Panc1 (cell line): ENCODE measurements at regions of chr17 and their contacts with region 1.

Region 1: GRCh38 chr17:72120642-72121163 is at the start of gene SOX9:
- DNase-seq: peak; percentile 85
- ATAC-seq: peak; percentile 87
- H3K4me3 ChIP-seq: peak within 1 kb of the TSS; percentile 76 to 89
- H3K27ac ChIP-seq: peak within 1 kb of the TSS; percentile 97
- H3K4me1 ChIP-seq: peaks cover 28% of the 10 kb centered on the region
- H3K27me3 ChIP-seq: no peaks in the 10 kb centered on the region
- CTCF ChIP-seq: no peak
- total RNA-seq, gene SOX9: 79.5 TPM

Region 2: DNA sequence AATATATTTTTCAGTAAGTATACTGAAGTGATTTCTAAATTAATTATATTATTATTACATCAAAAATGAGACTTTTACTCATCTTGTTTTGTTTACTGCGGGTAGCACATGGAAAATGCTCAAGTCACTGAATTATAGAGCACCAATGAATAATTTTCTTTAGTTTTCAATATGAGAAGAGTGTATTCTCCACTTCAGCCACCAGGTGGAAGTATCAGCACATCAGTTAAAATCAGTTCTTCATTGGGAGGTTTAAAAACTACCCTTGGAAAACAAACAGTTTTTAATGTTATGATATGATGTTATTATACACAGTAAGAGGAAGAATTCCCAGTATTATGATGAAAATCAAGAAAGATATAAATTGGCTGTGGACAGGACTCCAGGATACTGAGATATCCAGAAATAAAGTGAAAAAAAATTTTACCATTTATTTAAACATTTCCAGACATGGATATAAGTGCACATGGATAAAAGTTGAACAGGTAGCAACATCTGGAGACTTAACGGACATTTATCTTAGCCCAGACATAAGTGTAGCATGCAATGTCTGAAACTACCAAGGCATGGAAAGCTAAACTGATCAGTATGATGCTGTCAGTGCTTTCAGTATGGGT is 1484.1 kb before region 1 on chr17:
- CTCF ChIA-PET with region 1: no interaction called
- POLR2A ChIA-PET with region 1: no interaction called
- in situ Hi-C with region 1: no loop called
- intact Hi-C with region 1: loop called (anchors 10 kb)
- DNase-seq: peak; percentile 25
- ATAC-seq: no peak
- H3K4me3 ChIP-seq: no peak overlapping the region
- H3K27ac ChIP-seq: no peak overlapping the region
- H3K4me1 ChIP-seq: no peaks in the 10 kb centered on the region
- H3K27me3 ChIP-seq: peaks cover 12% of the 10 kb centered on the region; the same call in 1 of the 2 replicates
- CTCF ChIP-seq: peak; percentile 70; the same call in 1 of the 2 replicates

Region 3: DNA sequence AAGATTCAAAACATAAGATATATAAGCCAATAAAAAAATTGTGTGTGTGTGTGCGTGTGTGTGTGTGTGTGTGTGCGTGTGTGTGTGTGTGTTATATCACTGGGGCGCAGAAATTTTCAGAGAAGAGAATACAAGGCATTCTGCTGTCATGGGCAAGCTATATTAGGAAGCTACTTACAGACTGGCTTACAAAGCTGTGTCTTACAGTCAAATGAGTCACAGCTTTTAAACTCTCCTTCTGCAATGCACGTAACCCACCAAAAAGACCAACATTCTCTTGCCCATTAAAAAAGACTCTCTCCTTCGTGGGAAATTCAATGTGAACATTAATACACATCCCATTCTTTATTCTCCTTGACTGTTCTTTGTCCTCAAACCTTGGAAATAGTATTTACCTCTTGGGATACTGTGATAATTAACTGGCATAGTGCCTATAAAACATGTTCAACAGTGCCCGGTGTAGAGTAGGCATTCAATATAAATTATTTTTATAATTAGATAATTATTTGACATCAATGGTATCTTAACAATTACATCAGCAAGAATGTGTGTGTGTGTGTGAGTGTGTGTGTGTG is 860.2 kb before region 1 on chr17:
- CTCF ChIA-PET with region 1: no interaction called
- POLR2A ChIA-PET with region 1: interaction called, 13 read pairs
- in situ Hi-C with region 1: no loop called
- intact Hi-C with region 1: no loop called
- DNase-seq: no peak
- ATAC-seq: no peak
- H3K4me3 ChIP-seq: no peak overlapping the region
- H3K27ac ChIP-seq: no peak overlapping the region
- H3K4me1 ChIP-seq: no peaks in the 10 kb centered on the region
- H3K27me3 ChIP-seq: no peaks in the 10 kb centered on the region
- CTCF ChIP-seq: no peak

Region 4: DNA sequence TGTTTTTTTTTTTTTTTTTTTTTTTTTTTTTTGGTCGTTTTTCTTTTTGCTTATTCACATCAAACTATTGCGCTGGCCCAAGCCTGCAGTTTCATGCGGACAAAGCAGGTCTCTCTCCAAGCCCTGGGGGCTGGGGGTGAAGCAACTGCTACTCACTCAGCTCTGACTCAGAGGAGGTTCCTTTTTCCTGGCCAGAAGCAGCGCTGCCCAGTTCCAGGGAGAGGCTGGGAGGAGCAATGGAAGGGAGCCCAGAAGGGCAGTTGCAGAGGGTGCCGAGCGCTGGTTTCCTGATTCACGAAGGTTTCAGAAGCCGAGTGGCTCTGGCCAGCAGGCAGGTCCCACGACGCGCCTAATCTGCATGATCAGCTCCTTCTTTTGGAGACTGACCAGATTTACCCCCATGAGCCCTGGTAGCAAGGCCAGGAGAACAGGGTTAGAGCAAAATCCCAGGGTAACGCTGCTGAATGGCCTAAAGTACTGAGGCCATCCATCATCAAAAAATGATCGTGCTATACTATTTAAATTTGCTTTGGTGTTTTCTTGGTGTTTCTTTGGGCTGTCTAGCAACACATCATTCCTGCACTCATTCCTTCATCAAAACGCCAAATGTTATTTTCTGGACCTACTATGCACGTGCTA is 144.6 kb before region 1 on chr17:
- CTCF ChIA-PET with region 1: no interaction called
- POLR2A ChIA-PET with region 1: no interaction called
- in situ Hi-C with region 1: no loop called
- intact Hi-C with region 1: loop called (anchors 10 kb)
- DNase-seq: peak; percentile 71
- ATAC-seq: peak; percentile 98
- H3K4me3 ChIP-seq: peak overlapping the region; percentile 10 to 51; a peak in 3 of 4 replicates
- H3K27ac ChIP-seq: peak overlapping the region; percentile 18
- H3K4me1 ChIP-seq: peaks cover 5% of the 10 kb centered on the region
- H3K27me3 ChIP-seq: no peaks in the 10 kb centered on the region
- CTCF ChIP-seq: no peak

Region 5: DNA sequence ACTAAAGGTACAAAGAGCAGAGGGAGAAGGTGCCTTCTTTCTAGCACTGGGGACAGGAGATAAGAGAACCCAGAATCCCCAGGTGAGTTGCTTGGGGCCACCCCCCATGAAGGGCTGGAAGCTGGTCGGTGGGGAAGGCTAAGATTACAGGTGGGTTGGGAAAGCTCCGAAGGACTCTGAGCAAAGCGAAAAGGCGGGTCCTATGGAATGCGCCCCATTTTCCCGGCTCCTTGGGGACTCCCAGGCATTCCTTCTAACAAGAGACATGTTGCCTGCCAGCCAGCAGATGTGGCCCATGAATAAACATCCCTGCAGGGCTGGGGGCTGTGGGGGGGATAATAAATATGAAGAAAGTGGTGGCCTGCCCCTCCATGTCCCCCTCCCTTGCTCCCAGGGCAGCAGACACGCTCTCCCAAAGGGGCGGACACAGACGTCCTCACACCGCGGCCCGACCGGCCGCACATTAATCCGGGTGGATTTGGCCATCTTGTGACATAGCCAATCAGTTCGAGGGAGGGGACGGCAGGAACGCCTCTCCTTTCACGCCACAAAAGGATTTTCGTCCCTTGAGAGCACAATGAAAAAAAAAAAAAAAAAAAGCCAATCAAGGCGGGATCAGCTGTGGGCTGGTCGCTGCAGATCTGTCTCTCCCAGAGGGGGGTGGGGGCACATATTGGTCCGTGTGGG is 98.6 kb after region 1 on chr17:
- CTCF ChIA-PET with region 1: no interaction called
- POLR2A ChIA-PET with region 1: no interaction called
- in situ Hi-C with region 1: no loop called
- intact Hi-C with region 1: no loop called
- DNase-seq: no peak
- ATAC-seq: no peak
- H3K4me3 ChIP-seq: no peak overlapping the region
- H3K27ac ChIP-seq: no peak overlapping the region
- H3K4me1 ChIP-seq: no peaks in the 10 kb centered on the region
- H3K27me3 ChIP-seq: no peaks in the 10 kb centered on the region
- CTCF ChIP-seq: no peak

Region 6: GRCh38 chr17:72236915-72237633 is 116.4 kb after region 1 on chr17:
- CTCF ChIA-PET with region 1: no interaction called
- POLR2A ChIA-PET with region 1: interaction called, 11 read pairs
- in situ Hi-C with region 1: no loop called
- intact Hi-C with region 1: no loop called
- DNase-seq: no peak
- ATAC-seq: 0 out of 2 replicates have a peak, but pooled peaks have one; percentile 7
- H3K4me3 ChIP-seq: no peak overlapping the region
- H3K27ac ChIP-seq: peak overlapping the region; percentile 15; the same call in 1 of the 2 replicates
- H3K4me1 ChIP-seq: peaks cover 7% of the 10 kb centered on the region; the same call in 1 of the 2 replicates
- H3K27me3 ChIP-seq: no peaks in the 10 kb centered on the region
- CTCF ChIP-seq: no peak

Region 7: GRCh38 chr17:72421128-72422092 is 300.7 kb after region 1 on chr17:
- CTCF ChIA-PET with region 1: no interaction called
- POLR2A ChIA-PET with region 1: interaction called, 4 read pairs
- in situ Hi-C with region 1: loop called (anchors 25 kb)
- intact Hi-C with region 1: loop called (anchors 5 kb)
- DNase-seq: peak; percentile 82
- ATAC-seq: peak; percentile 88
- H3K4me3 ChIP-seq: peak overlapping the region in 1 of 2 experiments; percentile 13; a peak in 2 of 4 replicates
- H3K27ac ChIP-seq: peak overlapping the region; percentile 92
- H3K4me1 ChIP-seq: peaks cover 69% of the 10 kb centered on the region
- H3K27me3 ChIP-seq: no peaks in the 10 kb centered on the region
- CTCF ChIP-seq: no peak

Region 8: DNA sequence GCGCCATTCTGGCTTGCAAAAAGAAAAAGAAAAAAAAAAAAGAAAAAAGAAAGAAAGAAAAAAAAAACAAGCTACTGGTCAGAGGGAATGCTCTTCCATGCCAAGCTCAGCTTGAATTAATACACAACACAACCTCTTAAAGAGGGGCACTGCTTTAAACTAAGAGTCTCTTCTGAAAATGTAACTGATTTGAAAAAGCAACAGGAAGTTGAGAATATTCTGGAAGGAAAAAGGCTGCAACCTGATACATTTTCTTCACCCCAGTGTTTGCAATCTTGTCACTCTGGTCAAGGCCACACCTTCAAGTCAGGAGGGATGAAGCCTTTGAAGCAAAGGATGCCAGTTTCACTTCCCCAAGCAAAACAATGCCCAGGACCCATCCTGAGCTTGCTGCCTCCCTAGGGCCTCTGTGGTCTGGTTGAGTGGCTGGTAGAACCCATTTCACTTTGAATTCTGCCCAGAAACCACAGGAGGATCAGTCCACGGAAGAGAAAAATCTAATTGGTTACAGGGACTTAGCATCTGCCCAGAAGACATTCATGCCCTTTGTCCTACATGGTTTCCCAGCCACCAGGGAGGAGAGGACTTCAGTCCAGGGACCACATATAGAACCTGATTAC is 389.8 kb after region 1 on chr17:
- CTCF ChIA-PET with region 1: interaction called, 11 read pairs
- POLR2A ChIA-PET with region 1: interaction called, 3 read pairs
- in situ Hi-C with region 1: no loop called
- intact Hi-C with region 1: loop called (anchors 5 kb)
- DNase-seq: no peak
- ATAC-seq: peak; percentile 42
- H3K4me3 ChIP-seq: peak overlapping the region; percentile 7 to 21; a peak in 3 of 4 replicates
- H3K27ac ChIP-seq: peak overlapping the region; percentile 95
- H3K4me1 ChIP-seq: peaks cover 83% of the 10 kb centered on the region
- H3K27me3 ChIP-seq: no peaks in the 10 kb centered on the region
- CTCF ChIP-seq: no peak